ENCODE measurements at regions of chr22 and their contacts with region 1.

Region 1: GRCh38 chr22:17638432-17639246 is at the start of gene BCL2L13:
- DNase-seq: peak; percentile 94
- ATAC-seq: peak; percentile 96
- H3K4me3 Mint-ChIP-seq: peak within 1 kb of the TSS; percentile 88
- H3K27ac Mint-ChIP-seq: peak within 1 kb of the TSS; percentile 95
- H3K4me1 Mint-ChIP-seq: peaks cover 24% of the 10 kb centered on the region
- H3K27me3 Mint-ChIP-seq: no peaks in the 10 kb centered on the region
- total RNA-seq, gene BCL2L13: 34.1 to 34.5 TPM

Region 2: GRCh38 chr22:17158568-17159503 is 479.8 kb before region 1 on chr22 and contains the start of gene HDHD5:
- CTCF ChIA-PET with region 1: no interaction called
- POLR2A ChIA-PET with region 1: no interaction called
- intact Hi-C with region 1: loop called in 1 of 2 experiments (anchors 5 kb)
- DNase-seq: peak; percentile 94
- ATAC-seq: peak; percentile 82
- H3K4me3 Mint-ChIP-seq: peak within 1 kb of the TSS; percentile 84
- H3K27ac Mint-ChIP-seq: peak within 1 kb of the TSS; percentile 87
- H3K4me1 Mint-ChIP-seq: peaks cover 32% of the 10 kb centered on the region
- H3K27me3 Mint-ChIP-seq: no peaks in the 10 kb centered on the region
- total RNA-seq, gene HDHD5: 51.6 to 69.0 TPM

Region 3: GRCh38 chr22:17628304-17629166 is 10.1 kb before region 1 on chr22 and contains the start of gene ATP6V1E1:
- CTCF ChIA-PET with region 1: no interaction called
- POLR2A ChIA-PET with region 1: interaction called, 3 read pairs
- intact Hi-C with region 1: loop called (anchors 1 kb)
- DNase-seq: peak; percentile 96
- ATAC-seq: peak; percentile 100
- H3K4me3 Mint-ChIP-seq: peak within 1 kb of the TSS; percentile 95
- H3K27ac Mint-ChIP-seq: peak within 1 kb of the TSS; percentile 93
- H3K4me1 Mint-ChIP-seq: peaks cover 19% of the 10 kb centered on the region
- H3K27me3 Mint-ChIP-seq: no peaks in the 10 kb centered on the region
- total RNA-seq, gene ATP6V1E1: 83.5 to 95.6 TPM

Region 4: GRCh38 chr22:17672417-17672991 is 33.9 kb after region 1 on chr22:
- CTCF ChIA-PET with region 1: no interaction called
- POLR2A ChIA-PET with region 1: no interaction called
- intact Hi-C with region 1: loop called in 1 of 2 experiments (anchors 2 kb)
- DNase-seq: peak; percentile 24
- ATAC-seq: peak; percentile 63
- H3K4me3 Mint-ChIP-seq: no peak overlapping the region
- H3K27ac Mint-ChIP-seq: peak overlapping the region; percentile 66
- H3K4me1 Mint-ChIP-seq: peaks cover 19% of the 10 kb centered on the region
- H3K27me3 Mint-ChIP-seq: no peaks in the 10 kb centered on the region

Region 5: GRCh38 chr22:17706018-17706900 is 67.6 kb after region 1 on chr22:
- CTCF ChIA-PET with region 1: no interaction called
- POLR2A ChIA-PET with region 1: no interaction called
- intact Hi-C with region 1: loop called (anchors 2 to 5 kb)
- DNase-seq: peak; percentile 72
- ATAC-seq: peak; percentile 99
- H3K4me3 Mint-ChIP-seq: peak overlapping the region; percentile 49
- H3K27ac Mint-ChIP-seq: peak overlapping the region; percentile 94
- H3K4me1 Mint-ChIP-seq: peaks cover 21% of the 10 kb centered on the region
- H3K27me3 Mint-ChIP-seq: no peaks in the 10 kb centered on the region

Region 6: GRCh38 chr22:17767233-17768065 is 128.8 kb after region 1 on chr22:
- CTCF ChIA-PET with region 1: interaction called, 3 read pairs
- POLR2A ChIA-PET with region 1: no interaction called
- intact Hi-C with region 1: loop called in 1 of 2 experiments (anchors 1 kb)
- DNase-seq: peak; percentile 78
- ATAC-seq: peak; percentile 86
- H3K4me3 Mint-ChIP-seq: peak overlapping the region; percentile 50
- H3K27ac Mint-ChIP-seq: peak overlapping the region; percentile 55
- H3K4me1 Mint-ChIP-seq: peaks cover 54% of the 10 kb centered on the region
- H3K27me3 Mint-ChIP-seq: peaks cover 7% of the 10 kb centered on the region

Measured in activated CD4-positive, alpha-beta T cell treated with anti-CD3 and anti-CD28 coated beads for 36 hours (primary cell).